Posterior cingulate gyrus (tissue), 11 donors: ENCODE measurements at regions of chr3 and their contacts with region 1.

Region 1: GRCh38 chr3:53347261-53348064 is at the start of gene DCP1A:
- DNase-seq: peak; percentile 92 to 99 (median 94)

Region 2: DNA sequence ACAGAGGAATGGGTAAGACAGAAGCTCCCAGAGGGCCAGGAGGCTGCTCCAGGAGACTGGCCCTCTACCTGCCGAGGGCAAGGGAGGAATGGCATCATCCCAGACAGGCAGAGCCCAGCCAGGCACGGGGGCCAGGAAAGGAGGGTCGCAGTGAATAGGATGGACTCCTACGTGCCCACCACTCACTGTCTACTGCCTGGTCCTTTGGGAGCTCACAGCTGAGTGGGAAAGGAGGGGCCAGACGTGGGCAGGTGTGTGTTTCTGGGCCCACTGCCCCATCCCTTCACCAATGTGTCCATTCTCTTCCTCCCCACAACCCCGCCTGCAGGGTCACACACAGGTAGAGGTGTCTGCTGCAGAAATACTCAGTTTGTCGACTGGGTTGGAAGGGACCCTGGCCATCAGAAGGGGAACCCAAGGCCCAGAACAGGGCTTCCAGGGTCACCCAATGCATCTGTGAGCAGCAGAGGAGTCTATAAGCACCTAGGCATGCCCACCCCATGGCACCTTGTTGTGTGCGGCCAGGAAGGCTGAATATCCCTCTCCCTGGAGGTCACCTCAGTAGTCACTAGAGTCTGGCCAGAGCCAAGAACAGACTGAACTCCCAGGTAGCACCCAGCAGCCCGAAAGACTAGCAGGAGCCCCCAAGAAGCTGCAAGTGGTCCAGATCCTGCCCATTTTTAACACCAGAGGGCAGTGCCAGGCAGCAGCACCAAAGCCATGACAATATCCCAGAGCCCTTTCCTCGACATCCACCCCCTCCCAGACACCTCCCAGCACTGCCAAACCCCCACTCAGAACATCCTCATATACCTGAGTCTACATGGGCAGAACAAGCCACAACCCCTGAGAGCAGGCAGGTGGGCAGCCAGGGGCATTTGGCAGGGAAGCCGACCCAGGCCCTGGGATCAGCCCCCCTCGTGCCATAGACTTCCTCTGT is 115.6 kb before region 1 on chr3:
- intact Hi-C with region 1: no loop called
- DNase-seq: peak in 3 of 10 donors; percentile 53 to 79 (median 54)

Region 3: DNA sequence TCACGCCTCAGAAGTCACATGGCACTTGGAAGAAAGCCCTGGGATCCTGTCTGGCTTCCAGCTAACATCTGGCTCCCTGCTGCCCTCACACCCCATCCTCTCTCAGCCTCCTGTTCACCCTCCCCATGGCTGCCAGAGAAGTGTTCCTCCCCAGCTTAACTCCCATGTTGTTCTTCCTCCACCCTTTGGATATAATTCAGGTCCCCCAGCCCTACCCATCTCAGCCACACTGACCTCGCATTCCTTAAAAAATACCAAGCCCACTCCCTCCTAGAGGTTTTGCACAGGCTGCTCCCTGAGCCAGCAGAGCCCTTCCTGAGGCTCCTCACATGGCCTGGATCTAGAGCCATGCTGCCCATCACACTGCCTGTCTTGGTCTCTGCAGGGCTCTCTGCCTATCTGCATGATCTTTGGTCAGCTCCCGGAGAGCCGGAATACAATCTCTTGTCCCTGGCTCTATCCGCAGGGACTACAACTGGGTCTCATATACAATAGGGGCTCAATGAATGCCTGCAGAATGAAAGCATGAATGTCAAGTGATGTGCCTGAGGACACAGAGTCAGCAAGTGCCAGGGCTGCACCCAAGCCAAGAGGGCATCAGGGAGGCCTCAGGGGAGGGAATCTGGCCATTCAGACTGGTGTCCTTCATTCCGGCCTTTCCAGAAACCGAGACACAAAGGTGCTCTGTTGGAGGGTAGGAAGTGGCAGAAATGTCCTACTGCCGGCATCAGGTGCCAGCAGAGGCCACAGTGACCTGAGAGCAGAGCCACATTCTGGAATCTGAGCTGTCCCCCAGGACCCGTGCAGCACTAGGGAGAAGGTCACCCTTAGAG is 87.8 kb before region 1 on chr3:
- intact Hi-C with region 1: loop called (anchors 2 kb)
- DNase-seq: peak in 3 of 10 donors; percentile 36 to 59 (median 55)

Region 4: GRCh38 chr3:53303957-53304356 is 43.5 kb before region 1 on chr3:
- intact Hi-C with region 1: loop called (anchors 5 kb)
- DNase-seq: no peak

Region 5: GRCh38 chr3:53495520-53496391 is 148.3 kb after region 1 on chr3:
- intact Hi-C with region 1: loop called (anchors 5 kb)
- DNase-seq: peak; percentile 22 to 89 (median 42)

Region 6: DNA sequence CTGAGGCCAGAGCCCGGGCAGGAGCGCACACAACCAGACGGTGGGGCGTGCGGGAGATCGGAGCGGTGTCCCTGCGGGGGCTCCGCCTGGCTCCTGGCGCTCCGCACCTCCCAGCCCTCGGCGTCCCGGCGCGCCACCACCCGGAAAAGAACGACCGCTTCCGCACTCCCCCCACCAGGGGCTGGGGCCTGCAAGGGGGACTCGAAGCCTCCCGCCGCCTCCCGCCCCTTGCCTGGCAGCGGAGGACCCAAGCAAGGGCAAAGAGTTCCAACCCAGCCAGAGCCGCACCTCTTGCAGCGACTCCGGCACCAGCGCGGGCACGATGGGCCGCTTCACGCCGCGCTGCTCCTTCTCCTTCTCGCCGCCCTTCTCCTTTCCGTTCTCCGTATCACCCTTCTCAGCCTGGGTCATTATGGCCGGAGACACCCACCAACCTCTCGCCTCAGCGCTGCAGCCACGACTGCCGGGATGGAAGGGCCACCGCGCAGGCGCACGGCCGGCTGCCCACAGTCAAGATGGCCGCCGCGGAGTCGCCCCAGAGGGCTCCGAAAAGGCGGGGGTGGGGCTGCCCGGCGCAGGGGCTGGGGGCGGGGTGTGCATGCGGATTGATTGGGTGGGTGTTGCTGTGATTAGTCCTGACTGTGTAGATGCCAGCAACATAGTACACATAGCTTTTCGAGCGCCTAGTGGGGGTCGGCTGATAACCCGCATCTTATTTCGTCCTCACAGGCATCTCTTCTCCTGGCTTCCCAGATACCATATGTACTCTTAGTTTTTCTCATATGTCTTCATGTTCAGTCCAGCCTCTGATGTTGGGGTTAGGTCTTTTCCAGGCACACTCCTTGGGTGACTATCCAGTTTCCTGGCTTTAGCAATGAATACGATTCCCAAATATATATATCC is 534.5 kb after region 1 on chr3 and contains the start of gene ACTR8:
- intact Hi-C with region 1: loop called (anchors 2 kb)
- DNase-seq: peak; percentile 82 to 98 (median 88)